ENCODE measurements at regions of chrX and their contacts with region 1.

Region 1: DNA sequence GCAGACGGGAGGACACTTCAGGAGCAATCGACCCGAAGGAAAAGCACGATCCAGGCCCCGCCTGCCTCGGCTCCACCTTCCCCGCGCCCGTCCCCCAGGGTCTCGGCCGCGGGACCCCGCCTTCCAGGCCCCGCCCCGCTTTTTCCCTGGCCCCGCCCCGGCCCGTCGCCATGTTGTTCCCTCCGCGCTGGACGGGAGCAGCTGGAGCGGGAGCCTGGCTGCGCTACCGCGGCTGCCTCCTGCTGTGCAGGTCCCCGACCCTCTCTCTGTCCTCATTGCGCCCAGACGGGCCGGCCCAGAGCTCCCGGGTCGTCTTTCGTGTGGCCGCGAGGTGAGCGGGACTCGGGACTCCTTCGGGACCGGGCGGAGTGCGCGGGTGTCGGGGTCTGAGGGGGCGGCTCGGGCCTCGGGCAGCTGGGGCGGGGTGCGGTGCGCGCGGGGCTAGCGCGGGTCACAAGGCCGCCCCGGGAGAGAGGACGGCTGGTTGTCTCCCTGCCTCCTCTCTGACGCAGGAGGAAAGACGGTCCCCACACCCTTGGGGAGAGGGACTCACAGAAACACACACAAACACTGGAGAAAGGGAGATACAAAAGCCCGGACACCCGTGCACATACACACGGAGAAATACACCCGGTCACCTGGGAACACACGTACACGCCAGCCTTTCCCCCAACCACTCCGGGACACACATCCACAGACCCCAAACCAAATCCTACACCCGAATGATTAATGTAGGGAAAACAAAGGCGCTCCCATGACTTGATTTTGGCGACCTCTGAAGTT is at the start of gene RAB9A:
- H3K4me3 ChIP-seq: peak within 1 kb of the TSS; percentile 94
- H3K27ac ChIP-seq: peak within 1 kb of the TSS; percentile 98
- H3K4me1 ChIP-seq: peaks cover 44% of the 10 kb centered on the region
- CTCF ChIP-seq: peak; percentile 9; the same call in 1 of the 2 replicates

Region 2: GRCh38 chrX:13287816-13288215 is 401.3 kb before region 1 on chrX:
- CTCF ChIA-PET with region 1: no interaction called
- POLR2A ChIA-PET with region 1: no interaction called
- H3K4me3 ChIP-seq: no peak overlapping the region
- H3K27ac ChIP-seq: no peak overlapping the region
- H3K4me1 ChIP-seq: peaks cover 5% of the 10 kb centered on the region; the same call in 1 of the 2 replicates
- CTCF ChIP-seq: no peak

Region 3: DNA sequence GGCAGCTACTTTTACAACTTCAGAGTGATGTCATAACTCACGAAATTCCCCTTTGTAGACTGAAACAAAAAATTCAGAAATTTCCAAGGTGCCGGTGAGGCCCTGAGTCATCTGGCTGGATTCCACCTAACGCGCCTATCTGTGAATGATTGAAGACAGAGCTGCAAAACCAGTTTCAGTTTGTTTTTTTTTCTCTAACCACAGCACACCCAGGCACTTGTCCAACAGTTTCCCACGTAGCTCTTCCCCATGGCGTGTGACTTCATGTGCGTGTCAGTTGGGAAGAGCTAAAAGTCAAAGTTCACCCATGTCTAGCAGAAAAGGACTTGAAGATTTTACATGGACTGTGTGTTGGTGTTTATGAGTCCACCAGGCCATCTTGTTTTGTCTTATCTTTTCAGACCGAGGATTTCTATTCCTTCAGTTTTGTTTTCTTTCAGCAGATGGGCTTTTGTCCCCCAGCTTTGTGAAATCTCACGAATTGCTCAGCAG is 19.9 kb before region 1 on chrX:
- CTCF ChIA-PET with region 1: interaction called, 9 read pairs
- POLR2A ChIA-PET with region 1: interaction called, 27 read pairs
- H3K4me3 ChIP-seq: no peak overlapping the region
- H3K27ac ChIP-seq: peak overlapping the region; percentile 74
- H3K4me1 ChIP-seq: peaks cover 22% of the 10 kb centered on the region
- CTCF ChIP-seq: no peak

Measured in HEK293 (cell line).